ENCODE measurements at regions of chr7 and their contacts with region 1.

Region 1: GRCh38 chr7:7761340-7761980 is 43.1 kb upstream of the RPA3 start:
- DNase-seq: no peak
- H3K4me3 Mint-ChIP-seq: peak overlapping the region; percentile 90
- H3K27ac Mint-ChIP-seq: peak overlapping the region; percentile 91
- H3K4me1 Mint-ChIP-seq: peaks cover 38% of the 10 kb centered on the region
- H3K27me3 Mint-ChIP-seq: no peaks in the 10 kb centered on the region

Region 2: DNA sequence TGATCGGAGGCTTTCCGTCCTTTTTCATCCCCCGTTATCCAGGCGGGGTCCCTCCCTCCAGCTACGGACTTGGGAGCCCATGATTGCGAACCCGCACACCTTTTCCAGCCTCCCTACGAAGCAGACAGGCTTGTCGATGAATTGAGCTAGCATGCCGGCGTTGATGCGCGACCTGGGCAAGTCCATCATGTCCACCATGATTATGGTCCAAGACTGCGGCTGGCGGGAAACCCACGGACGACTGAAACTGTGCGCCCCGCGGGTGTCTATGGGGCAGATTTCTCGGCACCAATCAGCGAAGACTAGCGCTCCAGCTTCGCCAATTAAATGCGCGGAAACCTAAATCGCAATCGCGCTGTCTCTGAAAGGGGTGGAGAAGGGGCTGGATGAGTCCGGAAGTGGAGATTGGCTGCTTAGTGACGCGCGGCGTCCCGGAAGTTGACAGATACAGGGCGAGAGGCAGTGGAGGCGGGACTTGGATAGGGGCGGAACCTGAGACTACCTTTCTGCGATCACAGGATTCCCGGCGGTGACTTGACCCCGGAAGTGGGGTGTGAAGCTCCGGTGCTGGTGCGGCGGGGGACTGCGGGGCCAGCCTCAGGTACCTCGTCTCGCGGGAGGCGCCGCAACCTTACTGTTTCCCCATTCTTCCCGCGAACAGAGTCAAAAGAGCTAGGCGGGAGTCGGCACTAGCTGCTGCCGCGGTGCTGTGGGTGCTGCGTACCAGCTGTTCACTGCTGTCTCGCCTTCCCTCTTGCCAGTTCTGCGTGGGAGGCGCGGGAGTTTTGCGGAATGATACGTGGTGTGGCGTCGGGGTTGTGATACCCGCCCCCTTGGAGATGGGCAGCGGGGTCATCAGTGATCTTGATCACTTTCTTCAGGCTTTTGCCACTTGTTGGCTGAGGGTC is 121.0 kb before region 1 on chr7 and contains the start of gene UMAD1:
- CTCF ChIA-PET with region 1: no interaction called
- POLR2A ChIA-PET with region 1: interaction called, 18 read pairs
- DNase-seq: peak; percentile 99
- H3K4me3 Mint-ChIP-seq: peak within 1 kb of the TSS; percentile 90
- H3K27ac Mint-ChIP-seq: peak within 1 kb of the TSS; percentile 90
- H3K4me1 Mint-ChIP-seq: peaks cover 36% of the 10 kb centered on the region
- H3K27me3 Mint-ChIP-seq: no peaks in the 10 kb centered on the region
- total RNA-seq, gene UMAD1: 16.1 to 16.7 TPM

Region 3: GRCh38 chr7:7739204-7740036 is 22.0 kb before region 1 on chr7:
- CTCF ChIA-PET with region 1: no interaction called
- POLR2A ChIA-PET with region 1: no interaction called
- DNase-seq: no peak
- H3K4me3 Mint-ChIP-seq: no peak overlapping the region
- H3K27ac Mint-ChIP-seq: no peak overlapping the region
- H3K4me1 Mint-ChIP-seq: peaks cover 8% of the 10 kb centered on the region
- H3K27me3 Mint-ChIP-seq: no peaks in the 10 kb centered on the region

Region 4: DNA sequence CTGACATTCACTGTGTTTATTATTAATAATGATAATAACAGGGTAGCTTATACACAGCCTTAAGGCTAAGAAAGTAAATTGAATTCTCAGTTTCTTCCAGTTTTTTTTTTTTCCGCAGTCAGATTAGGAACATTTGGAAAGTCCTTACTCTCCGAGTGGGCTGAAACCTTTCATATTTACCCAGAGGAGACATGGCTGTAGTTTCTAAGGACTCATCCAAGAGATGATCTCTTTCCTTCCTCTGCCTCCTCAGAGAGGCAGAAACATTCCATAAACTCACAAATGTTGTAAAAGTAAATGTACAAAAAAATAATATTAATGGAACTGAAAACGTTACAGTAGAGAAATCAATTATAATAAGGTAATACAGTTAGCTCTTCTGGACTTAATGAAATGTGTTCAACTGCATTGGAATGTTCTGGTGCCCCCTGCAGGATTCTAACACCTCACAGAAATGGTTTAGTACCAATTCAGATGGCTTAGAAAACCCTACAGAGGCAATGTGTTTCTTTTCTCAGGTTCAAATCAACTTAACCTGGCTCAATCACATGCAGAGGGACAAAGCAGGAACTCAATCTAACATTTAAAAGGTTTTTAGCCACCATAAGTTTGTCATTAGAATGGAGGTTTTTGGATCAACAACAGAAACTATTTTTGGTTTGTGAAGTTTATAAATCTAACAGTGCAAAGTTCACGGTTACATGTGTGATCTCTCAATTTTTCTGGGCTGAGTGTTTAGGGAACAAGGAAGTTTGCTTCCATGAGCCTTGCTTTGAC is 428.8 kb after region 1 on chr7:
- CTCF ChIA-PET with region 1: interaction called, 10 read pairs
- POLR2A ChIA-PET with region 1: no interaction called
- DNase-seq: peak; percentile 69
- H3K4me3 Mint-ChIP-seq: no peak overlapping the region
- H3K27ac Mint-ChIP-seq: no peak overlapping the region
- H3K4me1 Mint-ChIP-seq: peaks cover 30% of the 10 kb centered on the region
- H3K27me3 Mint-ChIP-seq: peaks cover 3% of the 10 kb centered on the region

Measured in activated CD4-positive, alpha-beta memory T cell treated with anti-CD3 and anti-CD28 coated beads, Interleukin-2, amount 10 ng/mL, durations not matched to agents 7 days and 5 days (primary cell).